ENCODE measurements at regions of chr1 and their contacts with region 1.

Region 1: GRCh38 chr1:109490029-109490933 is 3.6 kb upstream of the CYB561D1 start:
- DNase-seq: peak; percentile 70 to 71
- H3K4me3 ChIP-seq: no peak overlapping the region
- H3K27ac ChIP-seq: no peak overlapping the region
- H3K4me1 ChIP-seq: peaks cover 0 to under 1% of the 10 kb centered on the region in 2 donors
- H3K27me3 ChIP-seq: no peaks in the 10 kb centered on the region
- CTCF ChIP-seq: peak; percentile 60 to 85 (median 73)
- POLR2A ChIP-seq: no peak

Region 2: GRCh38 chr1:109248797-109249642 is 241.3 kb before region 1 on chr1 and contains the start of gene CELSR2:
- intact Hi-C with region 1: no loop called
- DNase-seq: peak in 1 of 2 donors; percentile 41
- H3K4me3 ChIP-seq: peak within 1 kb of the TSS; percentile 8 to 57
- H3K27ac ChIP-seq: peak within 1 kb of the TSS in 1 of 2 donors; percentile 13
- H3K4me1 ChIP-seq: peaks cover 0 to 9% of the 10 kb centered on the region in 2 donors
- H3K27me3 ChIP-seq: no peaks in the 10 kb centered on the region
- CTCF ChIP-seq: no peak
- POLR2A ChIP-seq: peak in 1 of 2 donors; percentile 43
- total RNA-seq, gene CELSR2: 0.26 to 9.6 (median 5.4) TPM

Region 3: GRCh38 chr1:109532365-109533136 is 42.3 kb after region 1 on chr1:
- intact Hi-C with region 1: loop called (anchors 2 kb)
- DNase-seq: peak; percentile 80 to 85
- H3K4me3 ChIP-seq: no peak overlapping the region
- H3K27ac ChIP-seq: no peak overlapping the region
- H3K4me1 ChIP-seq: no peaks in the 10 kb centered on the region
- H3K27me3 ChIP-seq: no peaks in the 10 kb centered on the region
- CTCF ChIP-seq: peak; percentile 96 to 99 (median 97)
- POLR2A ChIP-seq: no peak

Measured in uterus (tissue), 4 donors.